ENCODE measurements at regions of chr3 and their contacts with region 1.

Region 1: DNA sequence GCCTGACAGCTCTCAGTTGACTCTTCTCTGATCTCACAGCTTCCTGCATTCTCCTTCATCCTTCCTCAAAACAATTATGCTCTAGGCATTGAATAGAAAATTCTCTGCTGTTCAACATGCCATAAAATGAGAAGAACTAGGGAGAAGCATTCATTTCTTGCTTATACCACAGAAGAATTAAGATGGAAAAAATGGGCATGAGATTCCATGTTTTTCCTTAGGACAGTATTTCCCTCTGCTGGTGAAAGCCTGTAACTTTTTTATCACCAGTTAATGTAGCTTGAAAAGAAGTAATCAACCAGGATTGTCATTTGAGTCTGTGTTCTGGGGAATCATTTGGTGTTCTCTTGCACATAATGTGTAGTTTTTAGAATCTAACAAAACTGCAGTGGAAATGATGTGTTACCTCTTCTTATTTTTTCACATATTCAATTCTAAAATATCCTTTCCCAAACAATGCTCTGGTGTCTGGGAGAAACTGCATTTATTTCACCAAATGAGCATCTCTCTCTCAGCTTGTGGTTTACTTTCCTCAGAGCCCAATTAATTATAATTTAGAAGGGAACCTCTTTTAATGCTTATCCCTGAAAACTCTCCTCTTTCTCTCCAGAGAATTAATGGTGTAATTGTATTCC is 92.8 kb upstream of the DCBLD2 start:
- DNase-seq: no peak
- ATAC-seq: peak in 1 of 2 donors; percentile 34
- H3K4me3 ChIP-seq: no peak overlapping the region
- H3K27ac ChIP-seq: no peak overlapping the region
- H3K4me1 ChIP-seq: no peaks in the 10 kb centered on the region
- H3K27me3 ChIP-seq: no peaks in the 10 kb centered on the region

Region 2: DNA sequence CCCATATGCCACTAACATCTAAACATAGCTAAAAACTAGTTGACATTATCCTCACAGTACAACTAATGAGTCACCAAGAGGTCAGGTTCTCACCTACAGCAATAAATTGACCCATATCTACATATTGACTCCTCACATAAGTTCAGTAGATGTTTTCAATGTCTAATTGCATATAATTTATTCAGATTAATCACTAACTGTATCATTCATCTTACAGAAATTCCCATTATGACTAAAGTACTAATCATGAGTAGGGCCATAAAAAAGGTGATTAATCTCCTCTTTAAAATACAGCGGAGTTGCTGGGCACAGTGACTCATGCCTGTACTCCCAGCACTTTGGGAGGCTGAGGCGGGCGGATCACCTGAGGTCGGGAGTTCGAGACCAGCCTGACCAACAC is 313.5 kb before region 1 on chr3:
- intact Hi-C with region 1: no loop called
- DNase-seq: no peak
- ATAC-seq: no peak
- H3K4me3 ChIP-seq: no peak overlapping the region
- H3K27ac ChIP-seq: no peak overlapping the region
- H3K4me1 ChIP-seq: no peaks in the 10 kb centered on the region
- H3K27me3 ChIP-seq: no peaks in the 10 kb centered on the region

Region 3: DNA sequence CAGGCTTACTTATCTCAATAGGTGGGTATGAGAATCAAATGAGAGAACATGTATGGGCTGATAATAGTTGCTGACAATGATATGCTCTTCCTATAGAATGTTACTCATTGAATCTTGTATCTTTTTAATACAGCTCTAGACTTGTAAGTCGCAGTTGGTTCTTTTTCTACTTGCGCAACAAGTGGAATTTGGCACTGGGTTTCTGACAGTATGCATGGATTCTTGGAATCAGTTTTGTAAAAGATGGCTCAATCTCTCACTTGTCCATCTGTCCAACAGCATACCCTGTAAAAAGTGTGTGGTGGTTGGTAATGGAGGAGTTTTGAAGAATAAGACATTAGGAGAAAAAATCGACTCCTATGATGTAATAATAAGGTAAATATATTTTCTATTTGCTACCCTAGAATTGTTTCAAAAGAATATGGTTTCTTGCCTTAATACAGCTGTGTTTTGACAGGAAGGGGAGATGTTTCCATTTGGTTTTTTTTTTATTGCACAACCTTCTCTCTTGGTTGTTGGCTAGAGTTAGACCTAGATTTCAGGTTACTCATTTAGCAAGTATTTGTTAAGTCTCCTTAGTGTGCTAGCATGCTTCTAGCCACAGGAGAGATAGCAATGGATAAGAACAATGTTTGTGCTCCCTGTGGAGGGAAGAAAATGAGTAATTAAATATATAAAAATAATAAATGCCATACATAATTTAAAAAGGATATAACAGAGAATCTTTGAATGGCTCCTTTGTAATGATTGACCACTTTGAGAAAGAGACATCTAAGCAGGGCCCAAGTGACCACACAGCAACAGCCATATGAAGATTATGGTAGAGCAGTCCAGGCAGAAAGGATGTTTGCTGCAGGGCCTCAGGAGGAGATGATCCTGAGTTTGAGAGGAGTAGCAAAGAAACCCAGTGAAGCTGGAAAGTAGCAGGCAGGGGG is 209.3 kb before region 1 on chr3:
- intact Hi-C with region 1: no loop called
- DNase-seq: no peak
- ATAC-seq: peak; percentile 62 to 64
- H3K4me3 ChIP-seq: no peak overlapping the region
- H3K27ac ChIP-seq: peak overlapping the region; percentile 65
- H3K4me1 ChIP-seq: peaks cover 9% of the 10 kb centered on the region
- H3K27me3 ChIP-seq: no peaks in the 10 kb centered on the region

Region 4: DNA sequence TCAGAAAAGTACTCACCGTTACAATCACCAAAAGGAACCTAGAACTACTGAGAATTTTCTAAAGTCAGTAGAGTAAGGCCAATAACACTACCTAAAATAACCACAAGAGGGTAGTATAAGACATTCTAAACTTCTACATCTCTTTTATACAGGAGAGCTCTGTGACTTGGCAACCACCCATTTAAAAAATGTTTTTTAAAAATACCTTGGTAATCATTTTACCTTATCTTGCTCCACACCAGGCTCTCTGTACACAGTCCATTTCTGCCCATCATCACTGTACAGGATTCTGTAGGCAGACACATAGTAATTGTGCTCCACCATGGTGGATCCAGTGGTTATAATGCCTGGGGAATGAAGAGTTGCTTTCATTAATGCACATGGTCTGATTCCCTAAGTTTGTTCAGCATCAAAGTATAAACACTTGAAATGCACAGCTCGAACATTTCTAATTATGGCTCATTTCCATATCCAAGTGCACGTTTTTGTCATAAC is 176.7 kb before region 1 on chr3:
- intact Hi-C with region 1: loop called (anchors 2 kb)
- DNase-seq: no peak
- ATAC-seq: peak; percentile 67 to 77
- H3K4me3 ChIP-seq: no peak overlapping the region
- H3K27ac ChIP-seq: no peak overlapping the region
- H3K4me1 ChIP-seq: no peaks in the 10 kb centered on the region
- H3K27me3 ChIP-seq: no peaks in the 10 kb centered on the region

Measured in right cardiac atrium (tissue), 5 donors.